ENCODE measurements at regions of chr1 and their contacts with region 1.

Region 1: DNA sequence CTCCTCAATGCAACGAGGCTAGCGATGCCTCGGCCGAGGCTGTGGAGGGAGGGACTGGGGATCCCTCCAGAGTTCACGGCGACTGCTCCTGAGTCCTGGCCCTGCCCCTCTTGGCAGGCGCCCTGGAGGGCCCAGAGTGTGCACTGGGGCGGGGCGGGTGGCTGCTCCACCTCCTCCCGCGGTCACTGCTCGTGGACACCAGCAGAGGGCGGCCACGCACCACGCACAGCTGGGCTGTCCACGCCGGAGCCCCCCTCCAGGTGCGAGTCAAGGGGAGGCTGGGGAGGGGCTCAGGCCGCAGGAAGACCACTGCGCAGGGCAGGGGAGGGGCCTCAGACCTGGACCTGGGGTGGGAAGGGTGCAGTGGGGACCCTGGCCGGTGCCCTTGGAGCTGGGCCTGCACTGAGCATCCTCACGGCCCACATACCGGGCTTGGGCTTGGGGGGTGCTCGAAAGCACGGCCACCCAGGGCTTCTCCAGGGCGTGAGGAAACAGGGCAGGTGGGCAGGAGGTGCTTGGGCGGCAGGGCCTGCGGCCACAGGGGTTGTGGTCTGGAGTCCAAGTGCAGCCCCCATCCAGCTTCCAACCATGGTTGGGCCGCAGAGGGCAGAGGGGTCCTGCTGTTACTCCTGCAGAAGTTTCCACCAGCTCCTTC is 20.6 kb upstream of the TTC34 start:
- DNase-seq: no peak
- H3K4me3 ChIP-seq: no peak overlapping the region
- H3K27ac ChIP-seq: no peak overlapping the region
- H3K4me1 ChIP-seq: peaks cover 0 to 7% (median 0%) of the 10 kb centered on the region in 4 donors
- H3K27me3 ChIP-seq: peaks cover 0 to 61% (median 15%) of the 10 kb centered on the region in 3 donors
- CTCF ChIP-seq: peak in 3 of 4 experiments; percentile 32 to 47 (median 45)
- EP300 ChIP-seq: no peak
- POLR2A ChIP-seq: no peak

Region 2: GRCh38 chr1:2242814-2243725 is 579.0 kb before region 1 on chr1:
- intact Hi-C with region 1: no loop called
- DNase-seq: no peak
- H3K4me3 ChIP-seq: no peak overlapping the region
- H3K27ac ChIP-seq: peak overlapping the region in 3 of 4 donors; percentile 14 to 92 (median 92)
- H3K4me1 ChIP-seq: peaks cover 0 to 90% (median 89%) of the 10 kb centered on the region in 4 donors
- H3K27me3 ChIP-seq: no peaks in the 10 kb centered on the region
- CTCF ChIP-seq: no peak
- EP300 ChIP-seq: no peak
- POLR2A ChIP-seq: no peak

Region 3: GRCh38 chr1:2875707-2876561 is 53.8 kb after region 1 on chr1:
- intact Hi-C with region 1: no loop called
- DNase-seq: no peak
- H3K4me3 ChIP-seq: no peak overlapping the region
- H3K27ac ChIP-seq: no peak overlapping the region
- H3K4me1 ChIP-seq: peaks cover 0 to 18% (median 17%) of the 10 kb centered on the region in 4 donors
- H3K27me3 ChIP-seq: peaks cover 2 to 25% (median 12%) of the 10 kb centered on the region in 3 donors
- CTCF ChIP-seq: peak in 3 of 4 experiments; percentile 13 to 54 (median 40)
- EP300 ChIP-seq: no peak
- POLR2A ChIP-seq: no peak

Region 4: DNA sequence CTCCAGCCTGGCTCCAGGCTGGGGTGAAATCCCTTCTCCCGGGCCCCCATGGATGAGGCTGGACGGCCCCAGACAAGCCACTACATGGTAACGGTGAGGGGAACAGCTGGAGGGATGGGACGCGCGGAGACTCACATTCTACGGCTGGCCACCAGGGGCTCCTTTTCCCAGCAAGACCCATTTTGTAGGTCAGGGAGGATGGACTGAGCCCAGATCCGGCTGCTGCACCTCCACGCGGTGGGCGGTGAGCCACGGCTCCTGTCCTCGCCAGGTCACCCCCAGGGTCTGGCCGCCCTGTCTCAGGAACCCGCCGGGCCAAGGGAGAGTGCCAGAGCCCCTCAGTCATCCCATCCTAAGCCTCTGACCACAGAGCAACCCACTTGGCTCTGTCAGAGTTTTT is 124.2 kb after region 1 on chr1:
- intact Hi-C with region 1: no loop called
- DNase-seq: peak; percentile 34
- H3K4me3 ChIP-seq: no peak overlapping the region
- H3K27ac ChIP-seq: no peak overlapping the region
- H3K4me1 ChIP-seq: no peaks in the 10 kb centered on the region
- H3K27me3 ChIP-seq: peaks cover 0 to 67% (median 24%) of the 10 kb centered on the region in 3 donors
- CTCF ChIP-seq: no peak
- EP300 ChIP-seq: no peak
- POLR2A ChIP-seq: no peak

Region 5: DNA sequence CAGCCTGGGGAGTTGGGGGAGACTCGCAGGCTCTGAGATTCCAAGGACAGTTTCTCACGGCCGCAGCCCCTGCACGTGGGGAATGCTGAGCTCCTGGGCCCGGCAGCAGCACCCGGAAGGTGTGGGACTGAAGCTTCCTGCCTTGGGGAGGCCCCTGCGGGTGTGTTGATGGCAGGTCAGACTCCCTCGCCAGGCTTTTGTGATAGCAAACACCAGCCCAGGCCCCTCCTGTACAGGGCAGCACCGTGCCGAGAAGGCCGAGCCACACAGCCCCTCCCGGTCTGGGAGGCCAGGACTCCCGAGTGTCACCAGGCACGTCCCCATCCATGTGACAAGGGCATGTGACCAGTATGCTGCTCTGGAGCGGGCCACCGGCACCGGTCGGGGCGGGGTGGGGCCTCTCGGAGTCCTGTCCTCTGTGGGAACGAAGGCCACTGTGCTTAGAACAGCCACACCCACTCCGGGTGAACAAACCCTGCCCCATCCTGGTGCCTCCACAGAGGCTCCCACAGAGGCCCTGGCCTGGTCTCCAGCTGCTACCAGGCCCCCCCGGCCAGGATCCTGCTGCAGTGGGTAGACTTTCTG is 601.2 kb after region 1 on chr1:
- intact Hi-C with region 1: loop called (anchors 5 kb)
- DNase-seq: no peak
- H3K4me3 ChIP-seq: no peak overlapping the region
- H3K27ac ChIP-seq: peak overlapping the region in 2 of 4 donors; percentile 34 to 49
- H3K4me1 ChIP-seq: peaks cover 0 to 5% (median 2%) of the 10 kb centered on the region in 4 donors
- H3K27me3 ChIP-seq: peaks cover 3 to 61% (median 33%) of the 10 kb centered on the region in 3 donors
- CTCF ChIP-seq: no peak
- EP300 ChIP-seq: no peak
- POLR2A ChIP-seq: peak in 1 of 2 donors; percentile 17